ENCODE measurements at regions of chr7 and their contacts with region 1.

Region 1: GRCh38 chr7:30504347-30505173 is at the start of gene GGCT:
- DNase-seq: peak; percentile 97
- ATAC-seq: peak; percentile 97
- H3K4me3 ChIP-seq: peak within 1 kb of the TSS; percentile 75 to 99 (median 84)
- H3K4me3 Mint-ChIP-seq: peak within 1 kb of the TSS; percentile 93
- H3K27ac ChIP-seq: peak within 1 kb of the TSS; percentile 34 to 71
- H3K27ac Mint-ChIP-seq: peak within 1 kb of the TSS; percentile 92
- H3K4me1 ChIP-seq: peaks cover 18 to 20% of the 10 kb centered on the region in 2 donors
- H3K4me1 Mint-ChIP-seq: peaks cover 33% of the 10 kb centered on the region
- H3K27me3 ChIP-seq: no peaks in the 10 kb centered on the region
- H3K27me3 Mint-ChIP-seq: no peaks in the 10 kb centered on the region
- CTCF ChIP-seq: no peak
- total RNA-seq, gene GGCT: 12.5 and 12.6 TPM in 2 replicates

Region 2: GRCh38 chr7:30134611-30135545 is 369.7 kb before region 1 on chr7 and contains the start of gene MTURN:
- CTCF ChIA-PET with region 1: no interaction called
- POLR2A ChIA-PET with region 1: no interaction called
- intact Hi-C with region 1: loop called (anchors 10 kb)
- DNase-seq: peak; percentile 92
- ATAC-seq: peak; percentile 83
- H3K4me3 ChIP-seq: peak within 1 kb of the TSS; percentile 63 to 95 (median 83)
- H3K4me3 Mint-ChIP-seq: peak within 1 kb of the TSS; percentile 98
- H3K27ac ChIP-seq: peak within 1 kb of the TSS in 1 of 2 donors; percentile 39
- H3K27ac Mint-ChIP-seq: peak within 1 kb of the TSS; percentile 93
- H3K4me1 ChIP-seq: peaks cover 0 to 18% of the 10 kb centered on the region in 2 donors
- H3K4me1 Mint-ChIP-seq: peaks cover 18% of the 10 kb centered on the region
- H3K27me3 ChIP-seq: peaks cover 0 to 3% (median 1%) of the 10 kb centered on the region in 4 experiments
- H3K27me3 Mint-ChIP-seq: peaks cover 11% of the 10 kb centered on the region
- CTCF ChIP-seq: no peak
- total RNA-seq, gene MTURN: 13.9 and 16.5 TPM in 2 replicates

Region 3: GRCh38 chr7:30284298-30285066 is 220.1 kb before region 1 on chr7 and contains the start of gene ZNRF2:
- CTCF ChIA-PET with region 1: no interaction called
- POLR2A ChIA-PET with region 1: no interaction called
- intact Hi-C with region 1: loop called (anchors 1 kb)
- DNase-seq: peak; percentile 99
- ATAC-seq: peak; percentile 80
- H3K4me3 ChIP-seq: peak within 1 kb of the TSS; percentile 46 to 91 (median 80)
- H3K4me3 Mint-ChIP-seq: peak within 1 kb of the TSS; percentile 88
- H3K27ac ChIP-seq: peak within 1 kb of the TSS; percentile 84 to 90
- H3K27ac Mint-ChIP-seq: peak within 1 kb of the TSS; percentile 96
- H3K4me1 ChIP-seq: peaks cover 19 to 30% of the 10 kb centered on the region in 2 donors
- H3K4me1 Mint-ChIP-seq: peaks cover 44% of the 10 kb centered on the region
- H3K27me3 ChIP-seq: no peaks in the 10 kb centered on the region
- H3K27me3 Mint-ChIP-seq: no peaks in the 10 kb centered on the region
- CTCF ChIP-seq: peak; percentile 41
- total RNA-seq, gene ZNRF2: 32.0 and 33.6 TPM in 2 replicates

Region 4: DNA sequence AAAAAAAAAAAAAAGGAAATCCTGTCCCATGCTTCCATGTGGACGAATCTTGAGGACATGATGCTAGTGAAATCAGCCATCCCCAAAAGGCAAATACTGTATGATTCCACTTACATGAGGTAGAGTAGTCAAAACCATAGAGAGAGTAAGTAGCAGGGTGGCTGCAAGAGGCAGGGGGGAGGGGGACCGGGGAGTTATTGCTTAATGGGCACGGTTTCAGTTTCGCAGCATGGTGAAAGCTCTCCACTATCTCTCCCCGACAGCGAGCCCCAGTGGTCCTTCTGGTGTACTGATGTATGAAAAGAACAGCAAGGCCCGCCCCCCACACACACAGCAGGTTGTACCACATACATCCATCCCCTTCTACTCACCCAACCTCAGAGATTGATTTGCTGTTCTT is 58.8 kb before region 1 on chr7:
- CTCF ChIA-PET with region 1: no interaction called
- POLR2A ChIA-PET with region 1: no interaction called
- intact Hi-C with region 1: loop called (anchors 5 kb)
- DNase-seq: peak; percentile 91
- ATAC-seq: peak; percentile 100
- H3K4me3 ChIP-seq: no peak overlapping the region
- H3K4me3 Mint-ChIP-seq: no peak overlapping the region
- H3K27ac ChIP-seq: peak overlapping the region in 1 of 2 donors; percentile 64
- H3K27ac Mint-ChIP-seq: peak overlapping the region; percentile 75
- H3K4me1 ChIP-seq: peaks cover 12% of the 10 kb centered on the region in 2 donors
- H3K4me1 Mint-ChIP-seq: peaks cover 8% of the 10 kb centered on the region
- H3K27me3 ChIP-seq: no peaks in the 10 kb centered on the region
- H3K27me3 Mint-ChIP-seq: no peaks in the 10 kb centered on the region
- CTCF ChIP-seq: peak; percentile 71

Region 5: GRCh38 chr7:30459591-30460257 is 44.8 kb before region 1 on chr7:
- CTCF ChIA-PET with region 1: interaction called, 4 read pairs
- POLR2A ChIA-PET with region 1: no interaction called
- intact Hi-C with region 1: loop called (anchors 5 kb)
- DNase-seq: no peak
- ATAC-seq: no peak
- H3K4me3 ChIP-seq: no peak overlapping the region
- H3K4me3 Mint-ChIP-seq: no peak overlapping the region
- H3K27ac ChIP-seq: no peak overlapping the region
- H3K27ac Mint-ChIP-seq: no peak overlapping the region
- H3K4me1 ChIP-seq: peaks cover 27 to 28% of the 10 kb centered on the region in 2 donors
- H3K4me1 Mint-ChIP-seq: peaks cover 32% of the 10 kb centered on the region
- H3K27me3 ChIP-seq: no peaks in the 10 kb centered on the region
- H3K27me3 Mint-ChIP-seq: no peaks in the 10 kb centered on the region
- CTCF ChIP-seq: no peak

Region 6: GRCh38 chr7:30478349-30479201 is 26.0 kb before region 1 on chr7 and contains the start of gene NOD1:
- CTCF ChIA-PET with region 1: interaction called, 3 read pairs
- POLR2A ChIA-PET with region 1: interaction called, 4 read pairs
- intact Hi-C with region 1: loop called (anchors 1 kb)
- DNase-seq: peak; percentile 74
- ATAC-seq: peak; percentile 89
- H3K4me3 ChIP-seq: peak within 1 kb of the TSS; percentile 62 to 87 (median 84)
- H3K4me3 Mint-ChIP-seq: peak within 1 kb of the TSS; percentile 93
- H3K27ac ChIP-seq: peak within 1 kb of the TSS; percentile 59 to 66
- H3K27ac Mint-ChIP-seq: peak within 1 kb of the TSS; percentile 88
- H3K4me1 ChIP-seq: peaks cover 46 to 47% of the 10 kb centered on the region in 2 donors
- H3K4me1 Mint-ChIP-seq: peaks cover 58% of the 10 kb centered on the region
- H3K27me3 ChIP-seq: no peaks in the 10 kb centered on the region
- H3K27me3 Mint-ChIP-seq: no peaks in the 10 kb centered on the region
- CTCF ChIP-seq: no peak
- total RNA-seq, gene NOD1: 28.8 and 31.2 TPM in 2 replicates

Region 7: GRCh38 chr7:30555525-30555924 is 51.0 kb after region 1 on chr7:
- CTCF ChIA-PET with region 1: no interaction called
- POLR2A ChIA-PET with region 1: no interaction called
- intact Hi-C with region 1: no loop called
- DNase-seq: no peak
- ATAC-seq: no peak
- H3K4me3 ChIP-seq: no peak overlapping the region
- H3K4me3 Mint-ChIP-seq: no peak overlapping the region
- H3K27ac ChIP-seq: no peak overlapping the region
- H3K27ac Mint-ChIP-seq: no peak overlapping the region
- H3K4me1 ChIP-seq: peaks cover 3 to 4% of the 10 kb centered on the region in 2 donors
- H3K4me1 Mint-ChIP-seq: peaks cover 5% of the 10 kb centered on the region
- H3K27me3 ChIP-seq: no peaks in the 10 kb centered on the region
- H3K27me3 Mint-ChIP-seq: no peaks in the 10 kb centered on the region
- CTCF ChIP-seq: no peak

Region 8: DNA sequence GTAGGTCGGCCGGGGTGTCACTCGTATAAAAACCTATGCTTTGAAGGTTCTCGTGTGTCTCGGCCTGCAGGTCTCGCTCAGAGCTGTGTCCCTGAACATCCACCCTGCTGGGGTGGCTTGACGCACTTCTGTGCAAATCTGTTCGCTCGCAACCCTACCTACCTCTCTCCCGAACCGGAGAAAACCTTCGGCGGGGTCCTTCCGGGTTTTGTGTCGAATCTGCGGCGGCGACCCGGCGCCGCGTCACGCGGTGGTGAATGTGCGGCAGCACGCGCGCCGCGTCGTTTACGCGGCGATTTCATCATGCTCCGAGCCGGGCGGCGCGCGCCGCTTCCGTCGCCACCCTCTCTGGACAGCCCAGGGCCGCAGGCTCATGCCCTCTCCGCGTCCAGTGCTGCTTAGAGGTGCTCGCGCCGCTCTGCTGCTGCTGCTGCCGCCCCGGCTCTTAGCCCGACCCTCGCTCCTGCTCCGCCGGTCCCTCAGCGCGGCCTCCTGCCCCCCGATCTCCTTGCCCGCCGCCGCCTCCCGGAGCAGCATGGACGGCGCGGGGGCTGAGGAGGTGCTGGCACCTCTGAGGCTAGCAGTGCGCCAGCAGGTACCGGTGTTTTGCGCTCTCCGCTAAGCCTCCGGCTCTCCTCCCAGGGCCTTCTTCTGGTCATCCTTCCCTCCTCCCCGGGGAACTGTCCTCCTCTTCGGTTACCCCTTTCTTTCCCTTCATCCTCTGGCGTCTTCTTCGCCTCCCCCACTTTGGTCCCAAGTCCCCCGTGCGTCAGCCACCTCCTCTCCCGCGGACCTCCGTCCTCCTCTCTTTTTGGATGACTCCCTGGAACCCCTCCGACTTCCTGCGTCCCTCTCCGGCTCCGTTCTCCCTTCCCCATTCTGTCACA is 90.2 kb after region 1 on chr7 and contains the start of gene GARS1:
- CTCF ChIA-PET with region 1: no interaction called
- POLR2A ChIA-PET with region 1: no interaction called
- intact Hi-C with region 1: loop called (anchors 2 kb)
- DNase-seq: peak; percentile 95
- ATAC-seq: peak; percentile 88
- H3K4me3 ChIP-seq: peak within 1 kb of the TSS; percentile 69 to 98 (median 93)
- H3K4me3 Mint-ChIP-seq: peak within 1 kb of the TSS; percentile 95
- H3K27ac ChIP-seq: peak within 1 kb of the TSS; percentile 89 to 98
- H3K27ac Mint-ChIP-seq: peak within 1 kb of the TSS; percentile 97
- H3K4me1 ChIP-seq: peaks cover 21 to 24% of the 10 kb centered on the region in 2 donors
- H3K4me1 Mint-ChIP-seq: peaks cover 57% of the 10 kb centered on the region
- H3K27me3 ChIP-seq: no peaks in the 10 kb centered on the region
- H3K27me3 Mint-ChIP-seq: no peaks in the 10 kb centered on the region
- CTCF ChIP-seq: no peak
- total RNA-seq, gene GARS1: 56.1 and 61.7 TPM in 2 replicates